CD8-positive, alpha-beta T cell (primary cell): ENCODE measurements at regions of chr5 and their contacts with region 1.

Region 1: DNA sequence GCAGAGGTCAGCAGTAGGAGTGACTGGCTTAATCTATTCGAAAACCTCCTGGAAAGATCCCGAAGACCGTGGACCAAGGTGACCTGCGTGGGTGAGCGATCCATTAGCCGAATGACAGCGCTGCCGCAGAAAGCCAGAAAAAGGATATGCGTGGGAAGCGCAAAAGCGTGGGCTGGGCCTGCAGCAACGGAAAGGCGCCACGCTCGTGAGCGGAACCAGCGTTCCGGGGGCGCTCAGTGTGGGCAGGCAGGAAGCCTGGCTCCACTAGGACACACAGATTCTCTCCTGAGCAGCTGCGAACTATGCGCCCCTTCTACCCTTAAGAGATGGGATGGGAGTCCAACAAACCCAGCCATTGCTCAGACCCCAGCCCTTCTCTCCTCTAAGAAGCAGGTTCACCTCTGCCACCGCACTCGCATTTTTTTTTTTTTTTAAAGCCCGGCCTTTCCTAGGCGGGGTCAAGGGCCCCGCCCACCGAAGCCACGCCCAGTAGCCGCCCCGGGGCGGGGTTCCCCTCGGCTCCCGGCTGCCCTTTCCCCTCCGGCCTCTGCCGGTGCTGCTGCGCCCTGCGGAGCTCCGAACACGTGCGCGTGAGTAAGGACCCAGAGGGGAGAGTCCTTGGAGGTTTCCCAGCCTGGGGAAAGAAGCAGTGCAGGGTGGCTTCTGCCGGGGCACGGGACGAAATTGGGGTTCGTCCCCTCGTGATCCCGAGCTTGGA is 19.8 kb upstream of the MATR3 start:
- DNase-seq: peak; percentile 73 to 91 (median 83)
- ATAC-seq: peak; percentile 90
- H3K4me3 ChIP-seq: peak overlapping the region; percentile 81 to 86
- H3K4me3 Mint-ChIP-seq: peak overlapping the region; percentile 88
- H3K27ac ChIP-seq: peak overlapping the region; percentile 56 to 57
- H3K27ac Mint-ChIP-seq: peak overlapping the region; percentile 72
- H3K4me1 ChIP-seq: peaks cover 36% of the 10 kb centered on the region
- H3K4me1 Mint-ChIP-seq: peaks cover 50% of the 10 kb centered on the region
- H3K27me3 ChIP-seq: no peaks in the 10 kb centered on the region
- H3K27me3 Mint-ChIP-seq: no peaks in the 10 kb centered on the region
- CTCF ChIP-seq: no peak

Region 2: DNA sequence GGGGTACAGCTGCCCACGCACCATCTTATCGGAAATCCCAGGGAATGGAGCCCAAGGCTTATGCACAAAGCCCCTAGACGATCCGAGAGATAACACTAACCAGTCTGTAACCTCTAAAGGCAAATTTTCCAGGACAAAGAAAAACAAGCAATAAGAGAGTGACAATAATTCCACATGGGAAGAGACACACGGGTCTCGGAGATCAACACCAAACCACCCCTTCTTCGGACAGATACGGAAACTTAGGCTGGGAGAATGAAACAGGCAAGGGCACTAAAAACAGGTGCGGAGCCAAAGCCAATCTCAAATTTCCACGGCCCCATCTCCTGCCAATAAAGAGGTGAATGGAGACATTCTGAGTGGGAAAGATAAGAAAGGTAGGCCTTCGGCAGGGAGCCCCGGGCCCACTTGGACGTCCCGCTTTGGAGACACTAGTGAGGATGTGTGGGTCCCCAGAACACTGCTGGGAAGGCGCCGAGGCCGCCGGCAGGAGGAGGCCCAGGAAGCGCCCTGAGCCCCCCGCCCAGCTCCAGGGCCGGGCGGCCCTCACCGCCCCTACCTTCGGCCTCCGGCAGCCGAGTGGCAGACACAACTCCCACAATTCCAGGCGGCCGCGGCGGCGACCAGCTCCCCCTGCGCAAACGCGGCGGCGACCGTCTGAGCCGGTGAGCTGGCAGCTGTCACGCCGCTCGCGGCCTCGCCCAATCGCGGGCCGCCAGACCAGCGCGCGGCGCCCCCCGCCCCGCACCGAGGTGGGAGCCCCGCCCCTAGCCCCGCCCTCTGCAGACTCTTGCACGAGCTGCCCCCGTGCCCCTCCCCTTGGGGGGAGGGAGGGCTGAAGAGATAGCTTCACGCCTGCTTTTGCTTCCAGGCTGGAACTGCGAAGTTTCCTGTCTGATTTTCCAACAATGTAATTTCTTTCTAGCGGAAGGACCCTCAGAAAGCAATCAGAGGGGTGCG is 75.7 kb before region 1 on chr5 and contains the start of gene SIL1:
- CTCF ChIA-PET with region 1: no interaction called
- POLR2A ChIA-PET with region 1: no interaction called
- intact Hi-C with region 1: loop called (anchors 1 to 5 kb)
- DNase-seq: peak; percentile 94 to 98 (median 96)
- ATAC-seq: peak; percentile 98
- H3K4me3 ChIP-seq: peak within 1 kb of the TSS; percentile 60 to 70
- H3K4me3 Mint-ChIP-seq: peak within 1 kb of the TSS; percentile 84
- H3K27ac ChIP-seq: peak within 1 kb of the TSS; percentile 82 to 84
- H3K27ac Mint-ChIP-seq: peak within 1 kb of the TSS; percentile 91
- H3K4me1 ChIP-seq: peaks cover 8% of the 10 kb centered on the region
- H3K4me1 Mint-ChIP-seq: peaks cover 24% of the 10 kb centered on the region
- H3K27me3 ChIP-seq: no peaks in the 10 kb centered on the region
- H3K27me3 Mint-ChIP-seq: no peaks in the 10 kb centered on the region
- CTCF ChIP-seq: no peak
- total RNA-seq, gene SIL1: 14.0 to 19.5 TPM

Region 3: DNA sequence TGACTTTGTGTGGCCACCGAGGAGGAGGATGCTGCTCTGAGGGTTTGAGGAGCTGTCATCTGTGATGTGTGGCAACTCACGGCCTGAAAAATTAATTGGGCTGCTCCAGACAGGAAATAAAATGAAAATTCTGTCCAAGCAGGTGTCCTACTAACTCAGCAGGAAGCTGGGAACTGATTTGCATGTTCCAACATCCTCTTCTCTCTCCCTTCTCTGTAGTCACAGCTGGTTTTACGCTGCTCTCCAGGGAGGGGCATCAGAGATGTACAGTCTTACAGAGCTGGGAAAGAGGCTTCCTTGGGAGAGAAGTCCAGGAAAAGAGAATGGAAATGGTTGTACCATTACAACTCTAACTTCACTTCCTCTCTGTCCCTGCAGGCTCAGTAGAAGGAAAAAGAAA is 51.4 kb before region 1 on chr5:
- CTCF ChIA-PET with region 1: no interaction called
- POLR2A ChIA-PET with region 1: no interaction called
- intact Hi-C with region 1: no loop called
- DNase-seq: no peak
- ATAC-seq: no peak
- H3K4me3 ChIP-seq: no peak overlapping the region
- H3K4me3 Mint-ChIP-seq: no peak overlapping the region
- H3K27ac ChIP-seq: no peak overlapping the region
- H3K27ac Mint-ChIP-seq: no peak overlapping the region
- H3K4me1 ChIP-seq: no peaks in the 10 kb centered on the region
- H3K4me1 Mint-ChIP-seq: no peaks in the 10 kb centered on the region
- H3K27me3 ChIP-seq: no peaks in the 10 kb centered on the region
- H3K27me3 Mint-ChIP-seq: peaks cover 8% of the 10 kb centered on the region
- CTCF ChIP-seq: no peak

Region 4: DNA sequence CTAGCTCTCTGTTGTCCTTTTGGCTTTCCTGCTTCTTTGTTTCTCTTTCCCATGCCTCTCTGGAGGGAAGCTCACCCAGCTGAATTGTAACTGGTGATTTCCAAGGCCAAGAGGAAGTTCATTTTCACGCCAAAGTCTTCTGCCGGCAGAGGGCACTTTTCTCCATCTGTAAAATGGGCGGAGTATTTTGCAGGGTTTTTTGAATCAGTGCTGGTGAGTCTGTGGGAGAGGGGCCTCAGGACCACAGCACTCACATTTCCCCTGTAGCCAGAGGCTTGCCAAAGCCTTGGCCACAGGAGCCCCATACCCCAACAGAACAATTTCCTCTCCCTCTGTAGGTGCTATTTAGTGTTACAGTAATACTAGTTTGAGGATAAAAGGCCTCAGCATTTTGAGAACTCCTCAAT is 22.4 kb before region 1 on chr5:
- CTCF ChIA-PET with region 1: interaction called, 5 read pairs
- POLR2A ChIA-PET with region 1: no interaction called
- intact Hi-C with region 1: loop called in 1 of 2 experiments (anchors 1 kb)
- DNase-seq: peak in 6 of 9 experiments; percentile 14 to 67 (median 48)
- ATAC-seq: no peak
- H3K4me3 ChIP-seq: no peak overlapping the region
- H3K4me3 Mint-ChIP-seq: no peak overlapping the region
- H3K27ac ChIP-seq: no peak overlapping the region
- H3K27ac Mint-ChIP-seq: no peak overlapping the region
- H3K4me1 ChIP-seq: no peaks in the 10 kb centered on the region
- H3K4me1 Mint-ChIP-seq: peaks cover 9% of the 10 kb centered on the region
- H3K27me3 ChIP-seq: no peaks in the 10 kb centered on the region
- H3K27me3 Mint-ChIP-seq: no peaks in the 10 kb centered on the region
- CTCF ChIP-seq: no peak

Region 5: GRCh38 chr5:139354186-139354585 is 80.5 kb after region 1 on chr5:
- CTCF ChIA-PET with region 1: no interaction called
- POLR2A ChIA-PET with region 1: no interaction called
- intact Hi-C with region 1: no loop called
- DNase-seq: no peak
- ATAC-seq: no peak
- H3K4me3 ChIP-seq: no peak overlapping the region
- H3K4me3 Mint-ChIP-seq: no peak overlapping the region
- H3K27ac ChIP-seq: no peak overlapping the region
- H3K27ac Mint-ChIP-seq: no peak overlapping the region
- H3K4me1 ChIP-seq: peaks cover 9% of the 10 kb centered on the region
- H3K4me1 Mint-ChIP-seq: peaks cover 62% of the 10 kb centered on the region
- H3K27me3 ChIP-seq: no peaks in the 10 kb centered on the region
- H3K27me3 Mint-ChIP-seq: no peaks in the 10 kb centered on the region
- CTCF ChIP-seq: no peak